CD4-positive, alpha-beta memory T cell (primary cell): ENCODE measurements at regions of chr5 and their contacts with region 1.

Region 1: DNA sequence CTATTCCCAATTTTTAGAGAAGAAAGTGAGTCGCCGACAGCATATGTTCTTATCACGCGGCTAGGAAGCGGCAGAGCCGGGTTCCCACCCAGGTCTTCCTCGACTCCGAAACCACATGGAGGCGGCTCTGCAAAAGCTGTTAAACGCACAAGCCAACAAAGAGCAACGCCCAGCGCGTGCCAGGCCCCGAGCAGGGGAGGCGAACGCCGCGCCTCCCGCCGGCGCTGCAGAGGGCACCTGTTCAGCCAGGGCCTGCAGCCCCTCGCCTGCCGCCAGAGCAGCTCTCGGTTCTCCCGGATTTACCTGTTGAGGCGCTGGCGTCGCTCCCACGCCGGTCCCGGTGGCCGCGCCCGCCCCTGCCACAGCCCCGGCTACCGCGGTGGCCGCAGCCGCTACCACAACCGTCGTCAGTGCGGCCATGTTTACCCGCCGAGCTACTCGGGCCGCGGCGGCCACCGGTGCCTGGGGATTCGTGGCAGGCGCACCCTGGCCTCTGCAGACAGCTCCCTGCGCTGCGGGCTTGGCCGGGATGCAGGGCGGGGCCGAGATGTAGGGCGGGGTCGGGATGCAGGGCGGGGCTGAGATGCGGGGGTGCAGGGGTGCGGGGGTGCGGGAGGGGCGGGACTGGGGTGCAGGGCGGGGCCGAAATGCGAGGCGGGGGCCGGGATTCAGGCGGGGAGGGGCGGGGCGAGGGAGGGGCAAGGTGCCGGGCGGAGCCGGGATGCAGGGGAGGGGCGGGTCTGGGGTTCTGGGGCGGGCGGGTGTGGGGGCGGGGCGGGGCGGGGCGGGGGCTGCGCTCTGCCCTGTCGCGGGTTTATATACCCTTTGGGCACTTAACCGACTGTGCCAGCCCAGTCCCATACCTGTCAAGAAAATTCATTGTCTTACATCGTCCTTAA is at the start of gene CCDC112:
- DNase-seq: peak; percentile 61 to 72 (median 64)
- H3K4me3 ChIP-seq: peak within 1 kb of the TSS; percentile 5 to 44
- H3K4me3 Mint-ChIP-seq: peak within 1 kb of the TSS; percentile 83 to 91 (median 89)
- H3K27ac ChIP-seq: no peak within 1 kb of the TSS
- H3K27ac Mint-ChIP-seq: peak within 1 kb of the TSS in 6 of 7 donors; percentile 44 to 83 (median 55)
- H3K4me1 ChIP-seq: peaks cover 13% of the 10 kb centered on the region
- H3K4me1 Mint-ChIP-seq: peaks cover 6 to 17% (median 15%) of the 10 kb centered on the region in 4 donors
- H3K27me3 ChIP-seq: no peaks in the 10 kb centered on the region
- H3K27me3 Mint-ChIP-seq: peaks cover 1 to 2% of the 10 kb centered on the region in 2 donors
- total RNA-seq, gene CCDC112: 5.9 to 6.3 TPM

Region 2: GRCh38 chr5:115262321-115263077 is 33.9 kb before region 1 on chr5 and contains the start of gene PGGT1B:
- CTCF ChIA-PET with region 1: no interaction called
- POLR2A ChIA-PET with region 1: interaction called, 23 read pairs
- intact Hi-C with region 1: loop called (anchors 2 kb)
- DNase-seq: peak; percentile 59 to 67 (median 66)
- H3K4me3 ChIP-seq: peak within 1 kb of the TSS; percentile 55 to 80
- H3K4me3 Mint-ChIP-seq: peak within 1 kb of the TSS; percentile 87 to 98 (median 98)
- H3K27ac ChIP-seq: peak within 1 kb of the TSS; percentile 77
- H3K27ac Mint-ChIP-seq: peak within 1 kb of the TSS; percentile 85 to 98 (median 95)
- H3K4me1 ChIP-seq: peaks cover 45% of the 10 kb centered on the region
- H3K4me1 Mint-ChIP-seq: peaks cover 37 to 52% (median 44%) of the 10 kb centered on the region in 4 donors
- H3K27me3 ChIP-seq: no peaks in the 10 kb centered on the region
- H3K27me3 Mint-ChIP-seq: no peaks in the 10 kb centered on the region
- total RNA-seq, gene PGGT1B: 40.6 to 42.4 TPM

Region 3: DNA sequence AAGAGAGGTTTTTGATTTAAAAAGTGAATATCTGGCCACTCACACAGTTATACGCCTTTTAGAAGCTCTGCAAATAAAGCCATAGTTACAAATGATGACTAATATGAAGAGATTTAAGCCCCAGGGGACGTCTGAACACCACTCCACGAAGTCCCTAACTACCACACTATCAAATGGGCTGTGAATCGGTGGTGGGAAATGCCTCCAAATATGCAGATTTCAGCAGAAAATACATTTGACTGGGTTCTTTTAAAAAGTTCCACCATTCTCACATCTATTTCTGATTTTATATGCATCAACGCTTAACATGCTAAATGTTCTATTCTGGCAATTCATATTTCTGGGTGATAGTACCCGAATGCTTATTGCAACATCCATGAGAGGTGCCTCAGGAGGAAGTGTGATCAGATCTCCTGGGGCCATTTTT is 283.4 kb after region 1 on chr5:
- CTCF ChIA-PET with region 1: interaction called, 10 read pairs
- POLR2A ChIA-PET with region 1: no interaction called
- intact Hi-C with region 1: no loop called
- DNase-seq: no peak
- H3K4me3 ChIP-seq: no peak overlapping the region
- H3K4me3 Mint-ChIP-seq: no peak overlapping the region
- H3K27ac ChIP-seq: no peak overlapping the region
- H3K27ac Mint-ChIP-seq: no peak overlapping the region
- H3K4me1 ChIP-seq: no peaks in the 10 kb centered on the region
- H3K4me1 Mint-ChIP-seq: no peaks in the 10 kb centered on the region
- H3K27me3 ChIP-seq: no peaks in the 10 kb centered on the region
- H3K27me3 Mint-ChIP-seq: no peaks in the 10 kb centered on the region